Left cardiac atrium (tissue), 4 donors: ENCODE measurements at regions of chr3 and their contacts with region 1.

Region 1: DNA sequence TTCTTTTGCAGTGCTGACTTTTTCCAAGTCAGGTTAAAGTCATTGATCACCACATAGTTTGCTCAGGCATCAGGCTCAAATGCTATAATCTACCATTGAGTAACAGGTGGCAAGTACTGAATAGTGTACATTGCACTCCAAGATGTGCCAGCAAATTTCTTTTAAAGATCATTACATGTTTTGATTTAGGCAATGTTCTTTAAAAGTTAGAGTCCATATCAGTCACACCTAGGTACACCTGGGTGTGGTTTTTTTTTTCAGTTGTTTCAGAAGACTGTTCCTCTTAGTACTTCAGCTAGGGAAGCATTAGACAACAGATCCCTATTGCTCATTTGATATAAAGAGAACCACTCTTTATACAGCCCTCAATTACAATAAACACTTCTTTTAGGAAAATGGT is 10.6 kb upstream of the SLC4A7 start:
- DNase-seq: no peak
- ATAC-seq: no peak

Region 2: DNA sequence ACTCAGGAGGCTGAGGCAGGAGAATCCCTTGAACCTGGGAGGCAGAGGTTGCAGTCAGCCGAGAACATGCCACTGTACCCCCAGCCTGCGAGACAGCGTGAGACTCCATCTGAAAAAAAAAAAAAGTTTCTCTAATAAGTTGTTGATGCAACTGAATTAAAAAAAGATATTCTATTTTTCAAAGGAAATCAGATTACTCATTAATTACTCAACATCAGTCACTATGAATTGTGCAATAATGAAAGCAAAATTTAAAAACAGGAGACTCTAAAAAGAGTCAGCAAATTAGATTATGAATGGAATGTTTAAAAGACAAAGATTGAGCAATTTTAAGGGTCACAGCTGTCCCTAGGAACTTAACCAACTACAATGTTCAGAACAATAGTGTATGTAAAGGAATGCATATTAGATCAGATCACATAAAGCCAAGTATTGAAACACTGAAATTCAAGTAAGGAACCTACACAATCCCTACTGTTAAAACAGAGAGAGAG is 49.6 kb after region 1 on chr3:
- intact Hi-C with region 1: no loop called
- DNase-seq: no peak
- ATAC-seq: peak; percentile 27 to 70

Region 3: DNA sequence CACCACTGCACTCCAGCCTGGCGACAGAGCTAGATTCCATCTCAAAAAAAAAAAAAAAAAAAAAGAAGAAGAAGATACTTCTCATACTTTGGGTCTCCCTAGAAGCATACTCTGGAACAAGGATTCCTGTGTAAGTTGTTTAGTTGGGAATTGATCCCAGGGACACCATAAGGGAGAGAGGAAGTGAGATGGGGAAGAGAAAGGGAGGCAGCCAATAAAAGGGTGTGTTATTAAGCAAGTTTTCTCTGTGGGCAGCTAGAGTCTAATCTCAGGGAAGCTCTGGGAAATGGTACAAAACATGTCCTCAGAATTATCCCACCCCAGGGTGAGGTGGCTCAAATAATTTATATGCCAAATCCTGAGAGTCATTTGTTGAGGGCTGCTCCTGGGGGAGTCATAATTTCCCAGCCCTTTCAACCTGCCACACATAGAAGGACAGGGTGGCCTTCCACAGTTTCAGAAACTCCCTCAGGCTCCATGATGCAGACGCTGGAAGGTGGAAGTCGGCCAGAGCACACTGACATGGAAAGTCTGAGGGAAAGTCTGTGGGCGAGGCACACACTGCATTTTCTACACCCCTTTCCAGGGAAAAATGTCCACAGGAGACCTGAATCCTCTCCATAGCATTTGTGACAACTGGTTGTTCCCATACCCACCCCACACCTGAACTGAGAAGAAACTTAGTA is 75.8 kb after region 1 on chr3:
- intact Hi-C with region 1: loop called in 1 of 2 experiments (anchors 10 kb)
- DNase-seq: peak; percentile 54
- ATAC-seq: peak in 1 of 2 donors; percentile 40

Region 4: GRCh38 chr3:27767000-27767399 is 272.2 kb after region 1 on chr3:
- intact Hi-C with region 1: no loop called
- DNase-seq: no peak
- ATAC-seq: no peak